Activated CD8-positive, alpha-beta T cell treated with anti-CD3 and anti-CD28 coated beads for 36 hours (primary cell): ENCODE measurements at regions of chr1 and their contacts with region 1.

Region 1: GRCh38 chr1:27772933-27773825 is at the start of gene STX12:
- DNase-seq: peak; percentile 100
- ATAC-seq: peak; percentile 96
- H3K4me3 Mint-ChIP-seq: peak within 1 kb of the TSS; percentile 94
- H3K27ac Mint-ChIP-seq: peak within 1 kb of the TSS; percentile 98
- H3K4me1 Mint-ChIP-seq: peaks cover 32% of the 10 kb centered on the region
- H3K27me3 Mint-ChIP-seq: no peaks in the 10 kb centered on the region
- CTCF ChIP-seq: no peak
- total RNA-seq, gene STX12: 19.4 to 22.1 TPM

Region 2: DNA sequence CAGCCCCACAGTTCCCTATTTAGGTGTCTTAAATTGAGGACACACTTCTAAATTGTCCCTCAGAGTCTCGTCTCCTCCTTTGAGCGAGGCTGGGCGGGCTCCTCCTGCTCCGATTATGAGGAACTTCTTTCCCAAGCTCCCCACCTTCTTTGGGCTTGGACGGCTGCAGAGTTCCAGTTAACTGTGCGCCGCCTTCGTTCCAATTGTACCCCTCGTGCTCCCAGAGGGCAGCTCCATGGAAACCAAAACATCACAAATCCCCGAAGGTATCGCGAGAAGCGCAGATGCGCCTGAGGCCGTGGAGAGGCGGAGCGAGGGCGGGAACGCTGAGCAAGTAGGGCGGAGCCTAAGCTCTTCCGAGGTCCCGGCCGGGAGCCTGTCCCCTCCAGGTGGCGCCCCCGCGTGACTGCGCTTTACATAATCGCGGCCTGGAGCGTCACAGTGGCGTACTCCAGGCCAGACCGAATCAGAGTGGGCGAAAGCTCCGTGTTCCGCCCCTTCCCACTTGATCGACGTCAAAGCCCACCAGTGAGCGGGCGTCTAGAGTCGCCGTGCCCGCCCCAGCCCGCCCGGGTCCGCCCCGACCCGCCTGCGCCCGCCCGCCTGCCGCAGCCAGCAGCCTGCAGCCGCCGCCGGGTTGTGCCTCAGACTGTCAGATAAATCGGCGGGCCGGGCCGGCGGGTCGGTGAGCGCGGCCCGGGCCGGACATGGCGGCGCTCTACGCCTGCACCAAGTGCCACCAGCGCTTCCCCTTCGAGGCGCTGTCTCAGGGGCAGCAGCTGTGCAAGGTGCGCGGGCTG is 47.6 kb before region 1 on chr1 and contains the start of gene FAM76A:
- CTCF ChIA-PET with region 1: interaction called, 3 read pairs
- POLR2A ChIA-PET with region 1: interaction called, 10 read pairs
- intact Hi-C with region 1: no loop called
- DNase-seq: peak; percentile 100
- ATAC-seq: peak; percentile 98
- H3K4me3 Mint-ChIP-seq: peak within 1 kb of the TSS; percentile 80
- H3K27ac Mint-ChIP-seq: peak within 1 kb of the TSS; percentile 94
- H3K4me1 Mint-ChIP-seq: peaks cover 24% of the 10 kb centered on the region
- H3K27me3 Mint-ChIP-seq: no peaks in the 10 kb centered on the region
- CTCF ChIP-seq: peak; percentile 36
- total RNA-seq, gene FAM76A: 6.9 to 7.9 TPM